ENCODE measurements at regions of chr1 and their contacts with region 1.

Region 1: GRCh38 chr1:156129706-156130581 is 15.4 kb downstream of the LMNA start:
- DNase-seq: peak; percentile 97
- ATAC-seq: peak; percentile 53
- H3K4me3 ChIP-seq: no peak overlapping the region
- H3K27ac ChIP-seq: peak overlapping the region; percentile 95
- H3K4me1 ChIP-seq: peaks cover 38% of the 10 kb centered on the region
- H3K27me3 ChIP-seq: no peaks in the 10 kb centered on the region
- CTCF ChIP-seq: peak; percentile 92
- POLR2A ChIP-seq: peak; percentile 79
- RAD21 ChIP-seq: peak; percentile 90

Region 2: GRCh38 chr1:156090822-156091188 is 39.1 kb before region 1 on chr1:
- CTCF ChIA-PET with region 1: interaction called, 64 read pairs
- POLR2A ChIA-PET with region 1: no interaction called
- dilution Hi-C with region 1: no loop called
- in situ Hi-C with region 1: loop called (anchors 5 kb)
- intact Hi-C with region 1: loop called (anchors 1 kb)
- DNase-seq: peak; percentile 71
- ATAC-seq: peak; percentile 90
- H3K4me3 ChIP-seq: no peak overlapping the region
- H3K27ac ChIP-seq: no peak overlapping the region
- H3K4me1 ChIP-seq: peaks cover 7% of the 10 kb centered on the region
- H3K27me3 ChIP-seq: no peaks in the 10 kb centered on the region
- CTCF ChIP-seq: peak; percentile 84
- POLR2A ChIP-seq: no peak
- RAD21 ChIP-seq: peak; percentile 91

Region 3: GRCh38 chr1:156096640-156097391 is 33.1 kb before region 1 on chr1:
- CTCF ChIA-PET with region 1: interaction called, 64 read pairs
- POLR2A ChIA-PET with region 1: interaction called, 8 read pairs
- dilution Hi-C with region 1: no loop called
- in situ Hi-C with region 1: loop called (anchors 5 kb)
- intact Hi-C with region 1: loop called (anchors 1 kb)
- DNase-seq: peak; percentile 78
- ATAC-seq: peak; percentile 99
- H3K4me3 ChIP-seq: no peak overlapping the region
- H3K27ac ChIP-seq: peak overlapping the region; percentile 73
- H3K4me1 ChIP-seq: peaks cover 9% of the 10 kb centered on the region
- H3K27me3 ChIP-seq: no peaks in the 10 kb centered on the region
- CTCF ChIP-seq: peak; percentile 98
- POLR2A ChIP-seq: peak; percentile 43; the same call in 1 of the 2 replicates
- RAD21 ChIP-seq: peak; percentile 97

Region 4: GRCh38 chr1:156114101-156114916 is 15.6 kb before region 1 on chr1 and contains the start of gene LMNA:
- CTCF ChIA-PET with region 1: interaction called, 6 read pairs
- POLR2A ChIA-PET with region 1: interaction called, 10 read pairs
- dilution Hi-C with region 1: no loop called
- in situ Hi-C with region 1: no loop called
- intact Hi-C with region 1: loop called (anchors 2 kb)
- DNase-seq: peak; percentile 95
- ATAC-seq: peak; percentile 88
- H3K4me3 ChIP-seq: peak within 1 kb of the TSS; percentile 98
- H3K27ac ChIP-seq: peak within 1 kb of the TSS; percentile 96
- H3K4me1 ChIP-seq: peaks cover 14% of the 10 kb centered on the region
- H3K27me3 ChIP-seq: no peaks in the 10 kb centered on the region
- CTCF ChIP-seq: no peak
- POLR2A ChIP-seq: peak; percentile 99
- RAD21 ChIP-seq: no peak
- total RNA-seq, gene LMNA: 753 and 755 TPM in 2 replicates

Measured in IMR-90 (cell line).